Heart left ventricle (tissue), 16 donors: ENCODE measurements at regions of chr3 and their contacts with region 1.

Region 1: DNA sequence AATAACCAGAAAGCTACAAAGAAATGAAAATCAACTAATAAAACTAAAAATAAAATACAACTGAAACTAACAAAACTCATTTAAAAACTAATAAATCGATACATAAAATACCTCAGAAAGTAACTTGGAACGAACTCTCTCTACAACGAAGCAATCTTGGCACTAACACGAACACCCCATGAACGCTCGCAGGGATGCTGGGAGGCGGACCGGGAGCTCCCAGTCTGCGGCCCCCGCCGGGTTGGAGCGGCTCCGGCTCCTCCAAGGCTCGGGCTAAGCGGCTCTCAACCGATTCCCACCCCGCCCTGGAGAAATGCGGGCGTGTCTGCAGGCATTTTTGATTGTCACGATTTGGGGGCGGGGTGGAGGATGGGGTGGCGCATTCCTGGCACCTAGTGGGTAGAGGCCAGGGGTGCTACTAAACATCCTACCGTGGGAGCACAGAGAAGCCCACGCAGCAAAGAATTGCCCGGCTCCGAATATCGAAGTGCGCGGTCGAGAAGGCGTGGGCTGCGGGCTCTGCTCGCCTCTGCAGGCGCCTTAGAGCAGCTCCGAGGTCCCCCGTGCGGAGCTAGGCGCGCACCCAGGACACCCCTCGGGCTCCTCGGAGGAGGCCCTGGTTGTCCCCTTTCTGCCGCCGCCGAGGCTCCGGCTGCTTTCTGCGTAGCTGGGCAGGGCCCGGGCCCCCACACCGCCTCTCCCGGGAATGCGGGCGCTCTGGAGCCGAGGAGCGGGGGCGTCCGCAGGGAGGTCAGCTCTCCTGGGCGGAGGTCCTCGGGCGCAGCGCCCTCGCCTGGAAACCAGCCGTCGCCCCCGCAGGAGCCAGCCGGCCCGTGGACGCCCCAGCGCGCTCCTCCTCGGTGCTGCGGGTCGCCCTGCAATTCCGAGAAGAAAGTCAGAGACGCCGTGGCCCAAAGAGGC is 16.4 kb upstream of the LAMP3 start:
- DNase-seq: peak in 4 of 5 donors; percentile 33 to 41 (median 36)
- ATAC-seq: peak in 3 of 4 donors; percentile 62 to 72 (median 65)
- H3K4me3 ChIP-seq: peak overlapping the region; percentile 28 to 64 (median 54)
- H3K27ac ChIP-seq: no peak overlapping the region
- H3K4me1 ChIP-seq: peaks cover 0 to 19% (median 12%) of the 10 kb centered on the region in 12 donors
- H3K27me3 ChIP-seq: peaks cover 14 to 50% (median 42%) of the 10 kb centered on the region in 9 donors
- CTCF ChIP-seq: peak in 5 of 12 donors; percentile 15 to 30 (median 24)
- POLR2A ChIP-seq: no peak

Region 2: DNA sequence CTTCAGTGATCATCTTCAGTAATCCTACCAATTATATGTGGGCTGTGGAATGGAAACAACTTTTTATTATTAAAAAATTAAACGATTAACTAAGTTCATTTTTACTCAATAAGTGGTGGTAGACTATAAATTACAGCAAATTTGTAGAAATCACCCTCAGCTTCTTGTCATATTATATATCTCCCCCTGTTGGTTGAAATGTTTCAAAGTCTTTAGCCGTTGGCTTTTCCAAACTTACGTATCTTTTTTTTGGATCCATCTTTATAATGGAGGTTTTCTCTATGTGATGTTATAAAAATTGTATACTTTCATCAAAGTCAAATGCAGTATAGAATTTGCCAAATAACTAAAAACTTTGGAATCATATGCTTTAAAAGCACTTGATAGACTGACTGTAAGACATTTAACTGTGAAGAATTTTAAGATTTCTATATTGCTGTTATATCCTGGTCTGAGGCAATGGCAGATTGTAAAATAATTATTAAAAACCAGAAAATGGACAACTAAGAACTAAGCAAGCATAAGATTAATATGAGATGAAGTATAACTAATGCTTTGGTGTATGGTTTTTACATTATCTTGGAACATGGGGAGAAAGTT is 340.9 kb before region 1 on chr3:
- intact Hi-C with region 1: no loop called
- DNase-seq: no peak
- ATAC-seq: no peak
- H3K4me3 ChIP-seq: no peak overlapping the region
- H3K27ac ChIP-seq: no peak overlapping the region
- H3K4me1 ChIP-seq: no peaks in the 10 kb centered on the region
- H3K27me3 ChIP-seq: no peaks in the 10 kb centered on the region
- CTCF ChIP-seq: peak in 10 of 12 donors; percentile 29 to 61 (median 50)
- POLR2A ChIP-seq: no peak

Region 3: GRCh38 chr3:183122257-183122932 is 56.5 kb before region 1 on chr3:
- intact Hi-C with region 1: loop called in 5 of 10 experiments (anchors 5 kb)
- DNase-seq: no peak
- ATAC-seq: peak in 3 of 4 donors; percentile 34 to 57 (median 49)
- H3K4me3 ChIP-seq: no peak overlapping the region
- H3K27ac ChIP-seq: no peak overlapping the region
- H3K4me1 ChIP-seq: peaks cover 0 to 3% (median 0%) of the 10 kb centered on the region in 12 donors
- H3K27me3 ChIP-seq: peaks cover 0 to 9% (median 0%) of the 10 kb centered on the region in 9 donors
- CTCF ChIP-seq: peak; percentile 69 to 91 (median 82)
- POLR2A ChIP-seq: no peak

Region 4: GRCh38 chr3:183129243-183129642 is 49.6 kb before region 1 on chr3:
- intact Hi-C with region 1: loop called in 5 of 10 experiments (anchors 5 kb)
- DNase-seq: no peak
- ATAC-seq: no peak
- H3K4me3 ChIP-seq: no peak overlapping the region
- H3K27ac ChIP-seq: no peak overlapping the region
- H3K4me1 ChIP-seq: no peaks in the 10 kb centered on the region
- H3K27me3 ChIP-seq: peaks cover 0 to 6% (median 0%) of the 10 kb centered on the region in 9 donors
- CTCF ChIP-seq: no peak
- POLR2A ChIP-seq: no peak

Region 5: GRCh38 chr3:183377307-183377959 is 198.5 kb after region 1 on chr3:
- intact Hi-C with region 1: loop called in 9 of 10 experiments (anchors 1 to 2 kb)
- DNase-seq: no peak
- ATAC-seq: no peak
- H3K4me3 ChIP-seq: no peak overlapping the region
- H3K27ac ChIP-seq: no peak overlapping the region
- H3K4me1 ChIP-seq: peaks cover 0 to 36% (median 0%) of the 10 kb centered on the region in 12 donors
- H3K27me3 ChIP-seq: no peaks in the 10 kb centered on the region
- CTCF ChIP-seq: no peak
- POLR2A ChIP-seq: no peak

Region 6: GRCh38 chr3:183385698-183386613 is 207.1 kb after region 1 on chr3:
- intact Hi-C with region 1: loop called (anchors 1 to 2 kb)
- DNase-seq: peak in 2 of 5 donors; percentile 27 to 46
- ATAC-seq: peak in 3 of 4 donors; percentile 83 to 89 (median 87)
- H3K4me3 ChIP-seq: no peak overlapping the region
- H3K27ac ChIP-seq: no peak overlapping the region
- H3K4me1 ChIP-seq: peaks cover 0 to 16% (median 0%) of the 10 kb centered on the region in 12 donors
- H3K27me3 ChIP-seq: no peaks in the 10 kb centered on the region
- CTCF ChIP-seq: peak; percentile 59 to 80 (median 70)
- POLR2A ChIP-seq: no peak